Activated T-helper 1 cell treated with anti-CD3 and anti-CD28 coated beads, Interleukin-12 subunit alpha, Interleukin-12 subunit beta, Interleukin-2, Interleukin-4 antibody, amounts not matched to agents 30 ng/mL and 10 ng/mL and 1 ng/mL, durations not matched to agents 14 hours and 24 hours and 36 hours (primary cell): ENCODE measurements at regions of chrX and their contacts with region 1.

Region 1: DNA sequence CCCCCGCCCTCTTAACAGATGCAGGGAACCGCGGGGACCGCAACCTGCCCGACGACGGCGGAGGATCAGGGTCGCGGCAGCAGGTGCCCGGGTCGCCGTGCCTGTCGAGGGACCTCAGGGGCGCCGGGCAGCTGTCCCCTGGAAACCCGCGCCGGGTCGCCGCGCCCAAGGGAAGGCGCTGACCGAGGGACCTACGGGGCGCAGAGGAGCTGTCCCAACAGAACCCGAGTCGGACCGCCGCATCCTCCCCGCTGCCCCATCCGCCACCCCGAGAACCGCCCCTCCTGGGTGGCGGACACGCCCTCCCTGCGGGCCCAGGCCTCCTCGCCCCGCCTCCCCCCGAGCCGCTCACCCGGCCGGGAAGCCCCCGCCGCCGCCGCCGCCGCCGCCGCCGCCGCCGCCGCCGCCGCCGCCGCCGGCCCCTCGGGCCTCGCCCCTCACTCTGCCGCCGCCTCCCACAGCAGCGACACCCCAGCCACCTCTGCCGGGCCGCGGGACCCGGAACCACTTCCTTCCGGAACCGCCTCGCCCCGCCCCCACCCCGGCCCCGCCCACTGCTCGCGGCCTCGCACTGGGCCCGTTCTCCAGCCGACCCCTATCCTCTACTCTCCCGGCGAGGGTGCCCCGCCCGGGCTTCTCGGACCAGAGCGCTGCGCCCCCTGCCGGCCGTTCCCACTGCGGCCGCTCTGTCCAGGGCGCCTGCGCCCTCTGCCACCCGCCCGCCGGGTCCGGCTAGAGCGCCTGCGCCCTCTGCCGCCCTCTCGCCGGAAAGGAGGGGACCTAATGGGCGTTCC is at the start of gene BCLAF3:
- DNase-seq: peak; percentile 81
- H3K4me3 Mint-ChIP-seq: peak within 1 kb of the TSS; percentile 94
- H3K27ac Mint-ChIP-seq: peak within 1 kb of the TSS; percentile 89
- H3K4me1 Mint-ChIP-seq: peaks cover 17% of the 10 kb centered on the region
- H3K27me3 Mint-ChIP-seq: peaks cover 3% of the 10 kb centered on the region
- total RNA-seq, gene BCLAF3: 5.4 and 6.2 TPM in 2 replicates

Region 2: DNA sequence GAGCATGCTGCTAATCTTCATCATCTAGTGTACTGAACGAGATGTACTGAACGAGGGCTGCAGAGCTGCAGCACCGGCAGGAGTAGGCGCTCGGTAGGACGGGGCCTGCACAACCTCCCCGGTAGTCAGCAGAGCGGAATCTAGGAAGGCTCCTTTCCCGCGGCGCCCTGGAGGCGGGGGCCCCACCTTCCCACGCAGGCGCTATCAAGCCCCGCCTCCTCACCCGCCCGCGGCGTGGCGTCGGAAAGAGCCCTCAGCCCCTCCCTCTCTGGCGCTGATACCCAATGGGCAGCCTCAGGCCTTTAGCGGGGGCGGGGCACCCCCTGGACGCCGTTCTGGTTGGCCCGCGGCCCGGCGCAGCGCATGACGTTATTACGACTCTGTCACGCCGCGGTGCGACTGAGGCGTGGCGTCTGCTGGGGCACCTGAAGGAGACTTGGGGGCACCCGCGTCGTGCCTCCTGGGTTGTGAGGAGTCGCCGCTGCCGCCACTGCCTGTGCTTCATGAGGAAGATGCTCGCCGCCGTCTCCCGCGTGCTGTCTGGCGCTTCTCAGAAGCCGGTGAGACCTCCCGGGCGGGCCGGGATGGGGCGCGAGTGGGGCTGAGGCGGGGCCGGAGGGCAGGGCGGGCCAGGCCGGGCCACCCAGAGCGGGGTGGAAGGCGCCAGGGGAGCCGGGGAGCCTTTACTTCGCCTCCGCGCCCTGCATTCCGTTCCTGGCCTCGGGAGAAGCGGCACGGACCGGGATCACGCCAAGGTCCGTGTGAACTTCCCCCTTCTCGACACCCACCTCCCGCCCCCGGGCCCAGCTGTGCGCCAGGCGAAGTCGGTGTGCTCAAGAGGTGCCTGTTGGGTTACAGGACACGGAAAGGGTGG is 647.0 kb before region 1 on chrX and contains the start of gene PDHA1:
- intact Hi-C with region 1: loop called (anchors 10 kb)
- DNase-seq: peak; percentile 90
- H3K4me3 Mint-ChIP-seq: peak within 1 kb of the TSS; percentile 90
- H3K27ac Mint-ChIP-seq: peak within 1 kb of the TSS; percentile 90
- H3K4me1 Mint-ChIP-seq: peaks cover 13% of the 10 kb centered on the region
- H3K27me3 Mint-ChIP-seq: peaks cover 2% of the 10 kb centered on the region
- total RNA-seq, gene PDHA1: 213 and 218 TPM in 2 replicates

Region 3: GRCh38 chrX:19544693-19545305 is 446.0 kb before region 1 on chrX:
- intact Hi-C with region 1: loop called (anchors 5 kb)
- DNase-seq: no peak
- H3K4me3 Mint-ChIP-seq: no peak overlapping the region
- H3K27ac Mint-ChIP-seq: peak overlapping the region; percentile 61
- H3K4me1 Mint-ChIP-seq: peaks cover 35% of the 10 kb centered on the region
- H3K27me3 Mint-ChIP-seq: no peaks in the 10 kb centered on the region

Region 4: DNA sequence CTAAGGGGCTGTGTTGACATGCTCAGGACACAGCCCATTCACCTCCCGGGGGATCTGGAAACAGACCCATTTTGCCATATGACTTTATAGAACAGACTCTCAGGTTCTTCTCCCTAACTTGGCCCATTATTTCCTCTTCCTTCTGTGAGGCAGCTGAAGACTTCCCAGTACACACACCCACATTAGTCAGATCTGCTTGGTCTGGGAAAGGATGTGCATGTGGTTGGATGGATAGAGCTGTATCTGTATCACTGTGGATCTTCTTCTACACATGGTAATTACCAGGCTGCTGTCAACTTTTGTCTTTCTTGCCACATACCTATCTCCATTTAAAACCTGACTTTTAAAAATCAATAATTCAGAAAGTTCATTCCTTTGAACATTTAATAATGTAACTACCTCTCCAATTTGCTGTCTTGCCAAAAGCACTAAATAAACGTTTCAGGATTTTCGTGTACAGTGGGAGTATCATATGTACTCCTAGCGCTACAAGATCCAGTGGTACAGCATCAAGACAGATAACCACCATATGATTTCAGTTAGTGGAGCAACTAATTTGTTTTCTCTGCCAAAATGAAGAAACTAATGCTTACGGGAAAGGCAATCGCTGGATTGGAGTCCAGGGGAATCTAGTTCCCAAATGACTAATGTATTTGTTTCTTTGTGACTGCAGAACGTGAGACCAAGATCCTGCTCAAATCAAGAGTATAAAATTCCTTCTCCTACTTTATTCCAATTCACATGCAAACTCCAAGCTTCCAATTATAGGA is 341.3 kb before region 1 on chrX:
- intact Hi-C with region 1: no loop called
- DNase-seq: no peak
- H3K4me3 Mint-ChIP-seq: no peak overlapping the region
- H3K27ac Mint-ChIP-seq: no peak overlapping the region
- H3K4me1 Mint-ChIP-seq: peaks cover 33% of the 10 kb centered on the region
- H3K27me3 Mint-ChIP-seq: no peaks in the 10 kb centered on the region

Region 5: GRCh38 chrX:19682712-19683331 is 307.9 kb before region 1 on chrX:
- intact Hi-C with region 1: loop called (anchors 2 kb)
- DNase-seq: peak; percentile 76
- H3K4me3 Mint-ChIP-seq: peak overlapping the region; percentile 59
- H3K27ac Mint-ChIP-seq: peak overlapping the region; percentile 98
- H3K4me1 Mint-ChIP-seq: peaks cover 88% of the 10 kb centered on the region
- H3K27me3 Mint-ChIP-seq: no peaks in the 10 kb centered on the region

Region 6: GRCh38 chrX:19904778-19905367 is 85.9 kb before region 1 on chrX:
- intact Hi-C with region 1: loop called (anchors 1 kb)
- DNase-seq: no peak
- H3K4me3 Mint-ChIP-seq: no peak overlapping the region
- H3K27ac Mint-ChIP-seq: no peak overlapping the region
- H3K4me1 Mint-ChIP-seq: peaks cover 19% of the 10 kb centered on the region
- H3K27me3 Mint-ChIP-seq: no peaks in the 10 kb centered on the region

Region 7: GRCh38 chrX:19915754-19916153 is 75.0 kb before region 1 on chrX:
- intact Hi-C with region 1: no loop called
- DNase-seq: no peak
- H3K4me3 Mint-ChIP-seq: no peak overlapping the region
- H3K27ac Mint-ChIP-seq: no peak overlapping the region
- H3K4me1 Mint-ChIP-seq: peaks cover 6% of the 10 kb centered on the region
- H3K27me3 Mint-ChIP-seq: no peaks in the 10 kb centered on the region

Region 8: DNA sequence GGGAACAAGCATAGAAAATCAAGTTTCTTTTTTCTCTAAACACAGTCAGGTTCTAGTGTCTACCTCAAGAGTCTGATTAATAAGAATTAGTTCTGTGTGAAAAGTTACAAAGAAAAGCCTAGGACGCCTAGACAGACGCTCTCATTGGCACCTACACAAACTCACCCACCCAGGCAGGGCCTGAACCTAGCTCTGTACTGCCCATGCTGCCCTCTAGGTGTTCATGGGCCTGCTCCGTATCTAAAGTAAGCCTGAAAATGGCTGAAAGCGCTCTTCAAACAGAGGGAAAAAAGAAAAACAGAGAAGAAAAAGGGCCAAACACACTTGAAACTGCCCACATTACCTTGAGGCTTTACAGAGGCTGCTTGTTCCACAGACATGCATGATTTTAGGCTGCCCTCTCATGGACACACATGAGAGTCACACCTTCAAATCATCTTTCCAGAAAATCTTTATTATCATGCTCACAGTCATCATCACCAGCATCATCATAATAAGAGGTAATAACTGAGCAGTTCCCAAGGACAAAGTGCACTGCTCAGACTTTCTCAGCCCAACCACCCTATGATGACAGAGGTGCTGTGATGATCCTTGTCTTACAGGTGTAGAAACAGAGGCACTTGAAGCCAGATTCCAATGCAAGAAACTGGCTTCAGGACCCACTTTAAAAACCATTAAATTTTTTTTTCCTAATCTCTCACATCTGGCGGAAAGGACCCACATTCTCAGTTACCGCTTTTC is 76.4 kb after region 1 on chrX:
- intact Hi-C with region 1: loop called (anchors 1 kb)
- DNase-seq: no peak
- H3K4me3 Mint-ChIP-seq: no peak overlapping the region
- H3K27ac Mint-ChIP-seq: no peak overlapping the region
- H3K4me1 Mint-ChIP-seq: no peaks in the 10 kb centered on the region
- H3K27me3 Mint-ChIP-seq: peaks cover 5% of the 10 kb centered on the region

Region 9: GRCh38 chrX:20333672-20334071 is 342.9 kb after region 1 on chrX:
- intact Hi-C with region 1: no loop called
- DNase-seq: no peak
- H3K4me3 Mint-ChIP-seq: no peak overlapping the region
- H3K27ac Mint-ChIP-seq: no peak overlapping the region
- H3K4me1 Mint-ChIP-seq: peaks cover 14% of the 10 kb centered on the region
- H3K27me3 Mint-ChIP-seq: no peaks in the 10 kb centered on the region